Kidney (tissue), 22 donors: ENCODE measurements at regions of chr11 and their contacts with region 1.

Region 1: GRCh38 chr11:124673333-124674167 is at the starts of genes SIAE and SPA17:
- DNase-seq: peak; percentile 93 to 99 (median 98)
- H3K4me3 ChIP-seq: peak within 1 kb of the TSS; percentile 72 to 87 (median 72)
- H3K27ac ChIP-seq: peak within 1 kb of the TSS; percentile 74 to 87
- H3K4me1 ChIP-seq: peaks cover 2 to 7% (median 6%) of the 10 kb centered on the region in 3 donors
- H3K27me3 ChIP-seq: no peaks in the 10 kb centered on the region
- CTCF ChIP-seq: no peak
- total RNA-seq, gene SIAE: 59.7 TPM
- total RNA-seq, gene SPA17: 10.7 TPM

Region 2: GRCh38 chr11:124763156-124763947 is 89.8 kb after region 1 on chr11:
- intact Hi-C with region 1: loop called (anchors 5 kb)
- DNase-seq: peak; percentile 88 to 95 (median 93)
- H3K4me3 ChIP-seq: peak overlapping the region; percentile 40 to 72 (median 48)
- H3K27ac ChIP-seq: peak overlapping the region; percentile 43 to 45
- H3K4me1 ChIP-seq: peaks cover 6 to 22% (median 20%) of the 10 kb centered on the region in 3 donors
- H3K27me3 ChIP-seq: peaks cover 2% of the 10 kb centered on the region
- CTCF ChIP-seq: peak; percentile 89

Region 3: DNA sequence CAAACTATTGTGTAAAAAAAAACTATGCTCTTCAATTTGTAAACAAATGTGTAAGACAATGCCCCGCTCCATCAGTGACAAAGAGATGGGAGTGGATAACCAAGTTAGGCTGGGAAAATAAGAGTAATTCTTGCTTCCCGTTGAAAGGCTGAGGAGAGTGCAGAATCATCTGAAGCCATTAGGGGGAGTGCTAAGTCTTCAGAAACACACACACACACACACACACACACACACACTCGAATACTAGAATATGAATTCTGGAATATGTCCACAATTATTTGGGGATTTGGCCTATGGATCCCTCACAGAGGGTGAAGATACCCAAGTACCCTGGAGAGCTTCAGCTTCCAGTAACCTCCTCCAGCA is 163.9 kb after region 1 on chr11:
- intact Hi-C with region 1: loop called (anchors 10 kb)
- DNase-seq: peak in 3 of 5 donors; percentile 35 to 85 (median 84)
- H3K4me3 ChIP-seq: no peak overlapping the region
- H3K27ac ChIP-seq: no peak overlapping the region
- H3K4me1 ChIP-seq: peaks cover 0 to 10% (median 4%) of the 10 kb centered on the region in 3 donors
- H3K27me3 ChIP-seq: peaks cover 29% of the 10 kb centered on the region
- CTCF ChIP-seq: peak; percentile 41